BJ (cell line): ENCODE measurements at regions of chr1 and their contacts with region 1.

Region 1: DNA sequence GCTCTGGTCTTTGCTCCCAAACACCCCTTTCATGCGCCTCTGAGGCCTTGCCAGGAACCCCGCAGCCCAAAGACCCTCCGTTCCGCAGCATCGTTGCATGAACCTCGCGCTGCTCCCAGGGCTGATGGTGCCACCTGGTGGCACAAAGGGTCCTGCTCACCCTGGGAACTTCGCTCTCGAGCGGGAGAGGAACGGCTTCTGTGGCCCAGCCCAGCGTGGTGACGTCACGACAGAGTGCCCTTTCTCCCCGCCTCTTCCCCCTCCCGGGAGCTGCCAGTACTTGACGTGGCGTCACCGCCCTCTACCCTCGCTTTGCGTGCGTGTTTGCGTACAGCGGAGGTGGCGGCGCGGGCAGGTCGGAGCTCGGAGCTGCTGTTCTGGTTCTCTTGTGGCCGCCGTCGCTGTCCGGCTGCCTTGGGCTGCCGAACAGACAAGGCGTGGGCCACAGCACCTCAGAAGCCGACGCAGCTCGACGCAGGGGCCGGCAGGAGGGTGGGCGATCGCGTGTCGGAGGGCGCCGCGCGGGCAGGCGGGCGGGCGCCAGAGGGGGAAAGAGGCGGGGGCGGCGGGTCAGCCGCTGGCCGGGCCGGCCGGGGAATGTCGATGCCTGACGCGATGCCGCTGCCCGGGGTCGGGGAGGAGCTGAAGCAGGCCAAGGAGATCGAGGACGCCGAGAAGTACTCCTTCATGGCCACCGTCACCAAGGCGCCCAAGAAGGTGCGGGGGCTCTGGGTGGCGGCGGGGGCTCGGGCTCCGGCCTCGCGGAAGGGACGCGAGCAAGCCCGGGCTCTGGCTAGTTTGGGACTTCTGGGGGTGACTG is at the start of gene AHCYL1:
- DNase-seq: peak; percentile 86
- H3K4me3 ChIP-seq: peak within 1 kb of the TSS; percentile 89
- H3K27me3 ChIP-seq: no peaks in the 10 kb centered on the region
- CTCF ChIP-seq: peak; percentile 96
- polyA plus RNA-seq, gene AHCYL1: 95.5 and 105 TPM in 2 replicates

Region 2: DNA sequence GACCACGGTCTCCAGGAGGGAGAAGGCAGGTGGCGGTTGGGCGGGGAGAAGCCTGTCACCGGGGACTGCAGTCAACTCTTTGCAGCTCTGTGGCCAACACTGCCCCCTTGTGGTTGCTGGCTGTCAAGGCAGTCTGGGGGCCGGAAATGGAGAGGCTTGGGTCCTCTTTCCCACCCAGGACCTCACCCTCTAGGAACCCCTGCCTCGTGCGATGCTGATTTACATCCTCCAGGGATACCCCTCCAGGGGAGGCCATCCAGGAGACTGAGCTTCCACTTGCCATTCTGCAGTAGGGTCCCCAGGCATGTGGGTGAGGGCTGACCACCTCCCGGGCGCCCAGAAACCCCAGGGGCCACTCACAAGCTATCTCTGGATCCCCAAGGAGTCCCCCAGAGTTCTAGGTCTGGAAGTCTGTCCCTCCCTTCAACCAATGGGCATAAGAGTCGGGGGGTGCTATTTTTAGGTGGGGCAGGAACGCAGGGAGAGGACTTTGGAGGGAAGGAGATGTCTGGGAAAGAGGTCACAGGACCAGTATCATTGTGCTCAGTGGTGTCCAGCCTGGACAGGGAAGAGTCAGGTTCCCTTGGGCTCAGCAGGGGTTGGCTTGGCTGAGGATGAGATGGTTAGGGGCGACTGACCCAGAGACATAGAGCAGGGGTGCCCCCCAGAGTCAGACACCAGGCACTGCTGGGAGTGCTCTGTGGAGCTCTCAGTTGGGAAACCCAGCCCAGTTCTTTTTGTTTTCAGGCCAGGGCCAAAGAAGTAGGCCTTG is 452.1 kb before region 1 on chr1:
- CTCF ChIA-PET with region 1: interaction called, 10 read pairs
- POLR2A ChIA-PET with region 1: no interaction called
- DNase-seq: no peak
- H3K4me3 ChIP-seq: no peak overlapping the region
- H3K27me3 ChIP-seq: no peaks in the 10 kb centered on the region; the same call in 1 of the 2 replicates
- CTCF ChIP-seq: peak; percentile 96

Region 3: DNA sequence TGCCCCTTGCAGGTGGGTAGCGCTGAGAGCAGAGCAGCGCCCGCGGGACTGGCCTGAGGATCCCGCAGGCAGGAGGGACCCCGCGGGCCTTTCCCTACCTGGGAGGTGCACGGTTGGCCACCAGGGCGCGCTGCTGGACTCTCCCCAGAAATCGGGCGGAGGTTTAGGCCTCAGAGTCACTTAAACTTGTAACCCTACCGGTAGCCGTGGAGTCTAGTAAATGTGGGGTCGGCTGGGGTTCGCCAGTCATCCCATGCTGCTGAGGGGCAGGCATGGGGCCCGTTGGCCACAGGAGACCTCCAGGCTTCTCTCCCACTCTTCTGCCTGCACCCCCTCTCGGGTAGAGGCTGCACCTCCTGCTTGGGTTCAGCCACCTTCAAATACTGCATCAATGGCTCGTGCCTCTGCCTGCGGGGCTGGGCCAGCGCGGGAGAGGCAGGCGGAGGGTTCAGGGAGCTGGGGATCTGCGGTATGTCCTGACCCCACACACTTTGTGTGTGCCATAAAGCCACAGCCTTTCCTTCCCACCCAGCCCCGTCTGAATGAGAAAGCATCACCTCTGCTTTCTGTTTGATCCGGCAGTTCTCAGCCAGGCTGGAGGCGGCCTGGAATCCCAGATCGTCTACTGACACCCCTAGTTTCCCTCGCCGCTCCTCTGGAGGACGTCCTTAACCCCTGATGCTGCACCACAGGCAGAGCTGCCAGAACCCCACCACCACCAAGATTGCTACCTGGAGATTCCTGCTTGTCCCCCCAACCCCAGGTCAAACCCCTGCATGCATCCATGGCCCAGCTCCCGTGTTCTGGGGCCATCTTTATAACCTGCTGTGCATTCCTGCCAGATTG is 341.1 kb before region 1 on chr1:
- CTCF ChIA-PET with region 1: interaction called, 40 read pairs
- POLR2A ChIA-PET with region 1: no interaction called
- DNase-seq: no peak
- H3K4me3 ChIP-seq: no peak overlapping the region
- H3K27me3 ChIP-seq: no peaks in the 10 kb centered on the region
- CTCF ChIP-seq: peak; percentile 85

Region 4: GRCh38 chr1:109877320-109877771 is 107.3 kb before region 1 on chr1:
- CTCF ChIA-PET with region 1: interaction called, 25 read pairs
- POLR2A ChIA-PET with region 1: interaction called, 4 read pairs
- DNase-seq: peak; percentile 87
- H3K4me3 ChIP-seq: no peak overlapping the region
- H3K27me3 ChIP-seq: no peaks in the 10 kb centered on the region
- CTCF ChIP-seq: peak; percentile 53

Region 5: GRCh38 chr1:109944541-109944940 is 40.1 kb before region 1 on chr1:
- CTCF ChIA-PET with region 1: interaction called, 11 read pairs
- POLR2A ChIA-PET with region 1: no interaction called
- DNase-seq: no peak
- H3K4me3 ChIP-seq: no peak overlapping the region
- H3K27me3 ChIP-seq: no peaks in the 10 kb centered on the region
- CTCF ChIP-seq: no peak

Region 6: DNA sequence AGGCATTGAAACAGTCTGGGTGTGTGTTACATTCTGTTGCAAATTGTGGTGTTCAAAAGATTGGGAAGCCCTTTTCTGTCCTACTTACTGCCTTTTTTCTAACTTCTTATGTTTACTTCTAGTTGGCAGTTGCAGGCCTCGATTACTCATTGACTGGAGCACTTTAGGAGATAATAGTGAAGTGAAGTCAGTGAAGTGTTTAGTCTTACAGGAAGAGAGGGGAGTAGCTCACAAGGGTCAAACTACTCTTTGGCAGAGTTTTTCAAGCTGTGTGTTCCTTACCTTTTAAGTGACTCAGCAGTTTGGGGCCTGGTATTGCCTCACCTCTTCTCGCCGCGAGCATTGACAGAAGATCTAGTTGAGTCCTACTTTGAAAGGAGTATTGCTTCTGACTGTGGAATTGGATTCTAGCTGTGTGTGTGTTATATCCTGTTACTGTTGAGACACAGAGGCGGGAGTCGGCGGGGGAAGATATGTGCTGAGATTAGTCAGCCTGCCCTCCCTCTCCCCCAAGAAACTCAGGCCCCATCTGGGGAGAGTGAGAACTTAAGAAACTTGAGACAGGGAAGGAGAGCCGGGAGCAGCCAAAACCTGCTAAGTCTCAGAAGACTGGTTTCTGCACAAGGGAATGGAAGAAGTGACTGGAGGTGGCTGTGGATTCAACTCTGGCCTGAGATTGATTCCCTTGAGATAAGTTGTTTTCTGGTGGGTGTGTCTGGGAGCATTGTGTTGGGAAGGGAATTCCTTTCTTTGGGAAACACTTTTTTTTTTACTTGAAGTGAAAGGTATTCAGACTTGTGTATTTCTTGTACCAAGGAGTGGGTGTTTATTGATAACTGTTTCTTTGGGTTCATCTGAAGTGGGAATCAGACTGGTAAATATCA is 19.3 kb after region 1 on chr1:
- CTCF ChIA-PET with region 1: interaction called, 50 read pairs
- POLR2A ChIA-PET with region 1: interaction called, 3 read pairs
- DNase-seq: peak; percentile 98
- H3K4me3 ChIP-seq: peak overlapping the region; percentile 17
- H3K27me3 ChIP-seq: no peaks in the 10 kb centered on the region
- CTCF ChIP-seq: no peak